Right cardiac atrium (tissue), 5 donors: ENCODE measurements at regions of chr17 and their contacts with region 1.

Region 1: GRCh38 chr17:42322382-42323267 is 34.3 kb downstream of the STAT5A start:
- DNase-seq: peak; percentile 91 to 97 (median 94)
- ATAC-seq: peak; percentile 68 to 81
- H3K4me3 ChIP-seq: no peak overlapping the region
- H3K27ac ChIP-seq: peak overlapping the region; percentile 14
- H3K4me1 ChIP-seq: no peaks in the 10 kb centered on the region
- H3K27me3 ChIP-seq: no peaks in the 10 kb centered on the region

Region 2: DNA sequence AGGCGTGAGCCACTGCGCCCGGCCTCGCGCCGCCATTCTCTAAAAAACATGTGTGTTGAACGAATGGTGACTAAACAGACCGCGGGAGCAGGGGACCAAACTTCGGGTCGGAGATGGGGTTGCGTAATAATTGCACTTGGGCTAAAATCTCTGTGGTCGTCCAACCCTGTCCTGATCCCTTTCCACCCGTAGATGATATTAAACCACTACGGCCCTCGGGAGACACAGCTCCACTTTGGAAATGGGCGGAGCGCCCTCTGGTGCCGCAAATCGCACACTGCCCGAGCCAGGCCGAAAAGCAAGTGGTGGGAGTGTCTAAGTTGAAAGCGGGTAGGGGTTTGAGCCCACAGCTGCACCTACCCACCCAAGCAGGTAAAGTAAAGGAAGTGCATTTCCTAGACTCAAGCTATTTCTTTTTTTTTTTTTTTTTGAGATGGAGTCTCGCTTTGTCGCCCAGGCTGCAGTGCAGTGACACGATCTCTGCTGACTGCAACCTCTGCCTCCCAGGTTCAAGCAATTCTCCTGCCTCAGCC is 83.4 kb after region 1 on chr17:
- intact Hi-C with region 1: loop called (anchors 2 to 5 kb)
- DNase-seq: peak; percentile 85 to 95 (median 94)
- ATAC-seq: peak; percentile 68 to 69
- H3K4me3 ChIP-seq: no peak overlapping the region
- H3K27ac ChIP-seq: peak overlapping the region; percentile 92
- H3K4me1 ChIP-seq: peaks cover 20% of the 10 kb centered on the region
- H3K27me3 ChIP-seq: no peaks in the 10 kb centered on the region

Region 3: DNA sequence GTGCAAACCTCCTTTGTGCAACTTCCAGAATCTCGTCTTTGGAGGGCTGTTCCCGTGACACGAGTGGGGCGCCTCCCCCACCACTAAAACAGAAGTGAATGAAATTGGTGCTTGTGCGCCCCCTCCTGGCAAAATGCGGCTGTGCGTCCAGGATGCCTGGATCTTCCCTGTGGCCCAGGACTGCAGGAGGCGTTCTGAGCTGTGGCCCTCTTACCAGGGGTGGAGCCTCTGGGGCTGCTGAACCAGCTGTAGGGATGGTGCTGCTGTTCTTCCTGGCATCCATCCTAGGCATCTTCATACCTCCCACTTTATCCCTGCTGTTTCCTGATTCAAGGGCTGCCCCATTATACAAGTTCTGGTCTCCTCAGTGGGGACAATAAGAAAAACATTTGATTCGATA is 194.9 kb after region 1 on chr17:
- intact Hi-C with region 1: loop called in 3 of 4 experiments (anchors 5 to 10 kb)
- DNase-seq: peak; percentile 87 to 96 (median 96)
- ATAC-seq: peak; percentile 60 to 62
- H3K4me3 ChIP-seq: no peak overlapping the region
- H3K27ac ChIP-seq: peak overlapping the region; percentile 99
- H3K4me1 ChIP-seq: peaks cover 50% of the 10 kb centered on the region
- H3K27me3 ChIP-seq: no peaks in the 10 kb centered on the region

Region 4: GRCh38 chr17:42527273-42527703 is 204.7 kb after region 1 on chr17:
- intact Hi-C with region 1: loop called in 1 of 4 experiments (anchors 5 kb)
- DNase-seq: peak; percentile 69 to 86 (median 75)
- ATAC-seq: peak; percentile 82 to 84
- H3K4me3 ChIP-seq: no peak overlapping the region
- H3K27ac ChIP-seq: no peak overlapping the region
- H3K4me1 ChIP-seq: no peaks in the 10 kb centered on the region
- H3K27me3 ChIP-seq: no peaks in the 10 kb centered on the region